ENCODE measurements at regions of chr1 and their contacts with region 1.

Region 1: DNA sequence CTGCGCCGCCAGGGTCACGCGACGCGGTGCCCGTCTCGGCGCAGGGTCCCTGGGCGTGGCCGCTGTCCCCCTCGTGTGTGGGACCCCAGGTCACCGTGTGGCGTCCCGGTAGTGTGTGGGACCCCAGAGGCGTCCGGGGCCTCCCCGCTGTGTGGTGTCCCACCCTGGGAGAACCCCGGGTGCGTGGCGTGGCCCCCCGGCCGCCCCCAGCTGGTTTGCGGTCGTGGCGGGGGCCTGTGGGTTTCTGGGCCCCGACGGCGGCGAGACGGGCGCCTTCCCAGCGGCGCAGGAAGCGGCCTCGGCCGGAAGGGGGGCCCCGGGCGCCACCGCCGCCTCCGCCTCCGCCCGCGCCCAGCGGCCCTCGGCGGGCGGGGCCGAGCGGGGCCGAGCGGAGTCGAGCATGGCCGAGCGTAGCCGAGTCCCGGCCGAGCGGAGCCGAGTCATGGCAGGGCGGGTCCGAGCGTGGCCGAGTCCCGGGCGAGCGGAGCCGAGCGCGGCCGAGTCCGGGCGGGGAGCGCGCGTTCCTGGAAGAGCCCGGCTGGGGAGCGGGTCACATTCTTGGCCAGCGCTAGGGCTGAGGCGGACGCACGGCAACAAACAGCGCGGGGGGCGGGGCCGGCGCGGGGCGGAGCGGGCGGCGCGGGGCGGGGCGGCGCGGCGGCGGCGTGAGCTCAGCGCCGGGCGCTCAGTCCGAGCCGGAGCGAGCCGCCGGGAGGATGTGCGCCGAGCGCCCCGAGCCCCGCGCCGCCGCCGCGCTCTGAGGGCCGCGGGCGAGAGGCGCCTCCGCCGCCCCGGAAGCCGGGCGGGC is 569 bp upstream of the SKI start:
- DNase-seq: peak; percentile 95
- H3K4me3 Mint-ChIP-seq: peak overlapping the region; percentile 61
- H3K27ac Mint-ChIP-seq: no peak overlapping the region
- H3K4me1 Mint-ChIP-seq: no peaks in the 10 kb centered on the region
- H3K27me3 Mint-ChIP-seq: no peaks in the 10 kb centered on the region

Region 2: DNA sequence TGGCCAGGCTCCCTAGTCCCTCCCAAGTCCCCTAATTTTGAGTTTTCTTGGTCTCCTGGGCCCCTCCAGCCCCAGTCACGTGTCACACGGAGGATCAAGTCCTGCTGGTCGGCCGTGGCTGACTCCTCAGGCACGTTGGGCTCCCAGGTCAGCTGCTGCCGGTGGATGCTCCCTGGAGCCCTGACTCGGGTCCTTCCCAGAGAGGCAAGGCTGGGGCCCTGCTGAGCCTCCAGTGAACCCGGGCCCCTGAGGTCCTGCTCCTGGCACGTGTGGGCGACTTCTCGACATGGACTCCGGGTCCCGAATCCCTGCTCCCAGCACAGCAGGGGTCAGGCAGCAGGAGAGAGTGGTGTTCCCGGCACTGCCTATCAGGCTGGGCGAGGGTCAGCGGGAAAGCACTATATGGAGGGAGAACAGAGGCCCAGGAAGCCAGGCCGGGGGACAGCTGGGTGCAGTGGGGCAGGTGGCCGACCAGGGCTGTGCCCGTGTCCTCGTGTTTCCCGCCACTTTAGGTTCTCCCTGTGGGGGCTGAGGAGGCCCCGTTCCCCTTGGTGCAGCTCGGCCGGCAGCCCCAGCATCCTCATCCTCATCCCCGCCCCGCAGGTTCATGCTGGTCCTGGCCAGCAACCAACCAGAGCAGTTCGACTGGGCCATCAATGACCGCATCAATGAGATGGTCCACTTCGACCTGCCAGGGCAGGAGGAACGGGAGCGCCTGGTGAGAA is 700.3 kb before region 1 on chr1:
- CTCF ChIA-PET with region 1: no interaction called
- intact Hi-C with region 1: no loop called
- DNase-seq: no peak
- H3K4me3 Mint-ChIP-seq: no peak overlapping the region
- H3K27ac Mint-ChIP-seq: no peak overlapping the region
- H3K4me1 Mint-ChIP-seq: no peaks in the 10 kb centered on the region
- H3K27me3 Mint-ChIP-seq: no peaks in the 10 kb centered on the region

Region 3: GRCh38 chr1:2212542-2213491 is 14.7 kb before region 1 on chr1:
- CTCF ChIA-PET with region 1: no interaction called
- intact Hi-C with region 1: loop called (anchors 2 kb)
- DNase-seq: peak; percentile 69
- H3K4me3 Mint-ChIP-seq: no peak overlapping the region
- H3K27ac Mint-ChIP-seq: no peak overlapping the region
- H3K4me1 Mint-ChIP-seq: peaks cover 8% of the 10 kb centered on the region
- H3K27me3 Mint-ChIP-seq: no peaks in the 10 kb centered on the region

Measured in activated naive CD4-positive, alpha-beta T cell treated with anti-CD3 and anti-CD28 coated beads for 36 hours (primary cell).